Activated naive CD8-positive, alpha-beta T cell treated with anti-CD3 and anti-CD28 coated beads, Interleukin-2, amount 10 ng/mL, durations not matched to agents 7 days and 5 days (primary cell): ENCODE measurements at regions of chr14 and their contacts with region 1.

Region 1: DNA sequence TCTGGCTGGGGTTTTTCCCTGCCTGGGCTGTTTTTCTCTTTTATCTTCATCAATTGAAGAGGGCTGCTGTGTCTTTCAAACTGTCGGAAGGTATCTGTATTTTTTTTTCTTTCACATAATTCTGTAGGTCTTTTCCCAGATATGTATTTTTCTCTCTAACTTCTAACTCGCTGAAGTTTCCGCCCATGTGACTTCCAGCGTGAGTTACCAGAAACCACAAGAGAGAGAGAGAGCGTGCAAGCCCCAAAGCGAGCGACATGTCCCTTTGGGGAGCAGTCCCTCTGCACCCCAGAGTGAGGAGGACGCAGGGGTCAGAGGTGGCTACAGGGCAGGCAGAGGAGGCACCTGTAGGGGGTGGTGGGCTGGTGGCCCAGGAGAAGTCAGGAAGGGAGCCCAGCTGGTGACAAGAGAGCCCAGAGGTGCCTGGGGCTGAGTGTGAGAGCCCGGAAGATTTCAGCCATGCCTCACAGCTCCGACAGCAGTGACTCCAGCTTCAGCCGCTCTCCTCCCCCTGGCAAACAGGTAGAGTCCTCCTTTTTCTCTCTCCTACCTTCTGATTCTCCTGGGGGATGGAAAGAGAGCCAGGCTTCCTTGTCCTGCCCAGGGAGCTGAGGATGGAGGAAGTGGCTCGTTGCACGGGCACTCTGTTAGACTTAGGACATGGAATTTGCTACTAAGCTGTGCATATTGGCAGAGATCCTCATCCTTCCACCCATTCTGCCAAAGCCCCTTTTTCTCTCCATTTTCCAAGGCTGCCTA is at the start of gene BATF:
- DNase-seq: peak; percentile 78
- ATAC-seq: peak; percentile 72
- H3K4me3 Mint-ChIP-seq: peak within 1 kb of the TSS; percentile 98
- H3K27ac Mint-ChIP-seq: peak within 1 kb of the TSS; percentile 98
- H3K4me1 Mint-ChIP-seq: peaks cover 47% of the 10 kb centered on the region
- H3K27me3 Mint-ChIP-seq: no peaks in the 10 kb centered on the region
- total RNA-seq, gene BATF: 31.3 to 34.1 TPM

Region 2: GRCh38 chr14:75476274-75476995 is 46.0 kb before region 1 on chr14:
- POLR2A ChIA-PET with region 1: no interaction called
- DNase-seq: no peak
- ATAC-seq: no peak
- H3K4me3 Mint-ChIP-seq: no peak overlapping the region
- H3K27ac Mint-ChIP-seq: no peak overlapping the region
- H3K4me1 Mint-ChIP-seq: peaks cover 3% of the 10 kb centered on the region
- H3K27me3 Mint-ChIP-seq: no peaks in the 10 kb centered on the region

Region 3: GRCh38 chr14:75506930-75507329 is 15.5 kb before region 1 on chr14:
- POLR2A ChIA-PET with region 1: no interaction called
- DNase-seq: no peak
- ATAC-seq: no peak
- H3K4me3 Mint-ChIP-seq: no peak overlapping the region
- H3K27ac Mint-ChIP-seq: no peak overlapping the region
- H3K4me1 Mint-ChIP-seq: peaks cover 3% of the 10 kb centered on the region
- H3K27me3 Mint-ChIP-seq: peaks cover 4% of the 10 kb centered on the region

Region 4: GRCh38 chr14:75542588-75543091 is 20.2 kb after region 1 on chr14:
- POLR2A ChIA-PET with region 1: interaction called, 44 read pairs
- DNase-seq: peak; percentile 66
- ATAC-seq: peak; percentile 86
- H3K4me3 Mint-ChIP-seq: peak overlapping the region; percentile 76
- H3K27ac Mint-ChIP-seq: peak overlapping the region; percentile 96
- H3K4me1 Mint-ChIP-seq: peaks cover 50% of the 10 kb centered on the region
- H3K27me3 Mint-ChIP-seq: no peaks in the 10 kb centered on the region

Region 5: GRCh38 chr14:75560962-75561432 is 38.6 kb after region 1 on chr14:
- POLR2A ChIA-PET with region 1: interaction called, 10 read pairs
- DNase-seq: no peak
- ATAC-seq: peak; percentile 44
- H3K4me3 Mint-ChIP-seq: peak overlapping the region; percentile 4
- H3K27ac Mint-ChIP-seq: peak overlapping the region; percentile 17
- H3K4me1 Mint-ChIP-seq: peaks cover 35% of the 10 kb centered on the region
- H3K27me3 Mint-ChIP-seq: no peaks in the 10 kb centered on the region

Region 6: GRCh38 chr14:75660630-75661494 is 138.5 kb after region 1 on chr14 and contains the starts of genes ERG28 and TTLL5:
- POLR2A ChIA-PET with region 1: interaction called, 11 read pairs
- DNase-seq: peak; percentile 97
- ATAC-seq: peak; percentile 99
- H3K4me3 Mint-ChIP-seq: peak within 1 kb of the TSS; percentile 93
- H3K27ac Mint-ChIP-seq: peak within 1 kb of the TSS; percentile 87
- H3K4me1 Mint-ChIP-seq: peaks cover 17% of the 10 kb centered on the region
- H3K27me3 Mint-ChIP-seq: no peaks in the 10 kb centered on the region
- total RNA-seq, gene ERG28: 16.0 to 16.5 TPM
- total RNA-seq, gene TTLL5: 31.8 to 32.7 TPM